ENCODE measurements at regions of chr15 and their contacts with region 1.

Region 1: GRCh38 chr15:89358755-89359439 is 24.3 kb upstream of the POLG start:
- DNase-seq: peak; percentile 6
- H3K4me3 ChIP-seq: peak overlapping the region; percentile 45
- H3K27me3 ChIP-seq: peaks cover 67% of the 10 kb centered on the region
- CTCF ChIP-seq: peak; percentile 91

Region 2: GRCh38 chr15:89230277-89230676 is 128.6 kb before region 1 on chr15:
- CTCF ChIA-PET with region 1: no interaction called
- POLR2A ChIA-PET with region 1: no interaction called
- DNase-seq: no peak
- H3K4me3 ChIP-seq: no peak overlapping the region
- H3K27me3 ChIP-seq: no peaks in the 10 kb centered on the region; the same call in 1 of the 2 replicates
- CTCF ChIP-seq: peak; percentile 38

Region 3: DNA sequence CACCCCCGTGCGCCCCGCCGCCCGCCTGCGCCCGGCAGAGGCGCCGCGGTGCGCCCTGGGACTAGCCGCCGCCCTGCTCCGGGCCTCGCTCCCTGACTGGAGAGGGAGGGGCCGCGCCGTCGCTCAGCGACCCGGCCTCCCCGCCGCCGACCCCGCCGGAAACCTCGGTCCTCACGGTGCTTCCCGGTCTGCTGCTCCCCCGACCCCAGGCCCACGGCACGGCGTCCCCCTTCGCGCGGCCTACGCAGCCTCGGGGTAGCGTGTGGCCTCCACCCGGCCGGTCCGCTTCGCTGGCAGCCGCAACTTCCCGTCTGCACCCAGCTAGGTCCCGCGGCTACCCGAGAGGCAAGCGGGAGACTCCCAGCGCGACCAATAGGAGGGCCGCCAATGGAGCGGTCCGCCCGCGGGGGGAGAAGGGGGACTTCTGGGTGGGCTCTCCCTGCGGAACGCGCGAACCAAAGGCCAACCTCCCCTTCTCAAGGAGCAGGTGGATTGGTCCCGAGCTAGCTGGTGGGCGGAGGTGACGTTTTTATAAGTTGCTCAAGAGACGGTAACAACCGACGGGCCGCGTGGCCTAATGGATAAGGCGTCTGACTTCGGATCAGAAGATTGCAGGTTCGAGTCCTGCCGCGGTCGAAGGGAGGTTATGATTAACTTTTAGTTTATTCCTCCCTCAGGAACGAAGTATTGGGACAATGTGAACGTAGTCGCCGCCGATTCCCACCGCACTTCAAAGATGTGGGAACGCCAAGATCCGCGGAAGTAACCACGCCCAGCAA is 24.2 kb before region 1 on chr15 and contains the start of gene POLG:
- CTCF ChIA-PET with region 1: interaction called, 69 read pairs
- POLR2A ChIA-PET with region 1: no interaction called
- DNase-seq: peak; percentile 92
- H3K4me3 ChIP-seq: peak within 1 kb of the TSS; percentile 92
- H3K27me3 ChIP-seq: peaks cover 7% of the 10 kb centered on the region
- CTCF ChIP-seq: no peak
- polyA plus RNA-seq, gene POLG: 13.9 and 17.6 TPM in 2 replicates

Region 4: GRCh38 chr15:89383365-89384175 is 24.7 kb after region 1 on chr15:
- CTCF ChIA-PET with region 1: interaction called, 35 read pairs
- POLR2A ChIA-PET with region 1: no interaction called
- DNase-seq: no peak
- H3K4me3 ChIP-seq: no peak overlapping the region
- H3K27me3 ChIP-seq: peaks cover 32% of the 10 kb centered on the region
- CTCF ChIP-seq: no peak

Region 5: DNA sequence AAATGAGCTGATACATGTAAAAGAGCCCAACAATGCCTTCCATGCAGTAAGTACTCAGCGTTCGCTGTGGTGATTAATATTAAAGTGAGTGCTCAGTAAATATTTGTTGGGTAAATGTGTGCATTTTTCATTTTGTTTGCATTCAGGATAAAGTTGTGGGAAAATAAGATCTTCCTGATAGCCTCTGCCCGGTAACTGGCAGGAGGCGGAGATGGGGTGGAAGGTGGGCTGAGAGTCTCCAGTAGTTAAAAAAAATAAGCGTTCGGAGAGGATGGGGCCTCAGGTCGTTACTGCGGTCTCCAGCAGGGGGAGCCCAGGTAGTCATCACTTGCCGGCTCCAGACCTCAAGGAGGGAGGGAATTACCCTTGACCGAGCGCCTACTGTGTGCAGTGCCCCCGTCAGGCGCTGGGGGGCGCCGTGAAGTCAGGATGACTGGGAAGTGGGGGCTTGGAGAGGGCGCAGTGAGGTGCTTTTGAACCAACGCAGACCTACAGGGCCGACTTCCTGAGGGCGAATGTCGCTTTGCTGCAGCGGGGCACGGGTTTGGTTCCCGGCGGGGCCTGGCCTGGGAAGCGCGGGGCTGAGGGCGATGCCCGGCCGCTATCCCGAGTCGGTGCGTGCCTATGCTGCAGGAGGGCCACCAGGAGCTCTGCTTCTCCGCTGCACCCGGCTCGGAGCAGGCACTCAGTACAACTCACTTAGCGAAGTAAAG is 57.4 kb after region 1 on chr15:
- CTCF ChIA-PET with region 1: interaction called, 79 read pairs
- POLR2A ChIA-PET with region 1: no interaction called
- DNase-seq: no peak
- H3K4me3 ChIP-seq: no peak overlapping the region
- H3K27me3 ChIP-seq: peaks cover 54% of the 10 kb centered on the region
- CTCF ChIP-seq: peak; percentile 82

Region 6: DNA sequence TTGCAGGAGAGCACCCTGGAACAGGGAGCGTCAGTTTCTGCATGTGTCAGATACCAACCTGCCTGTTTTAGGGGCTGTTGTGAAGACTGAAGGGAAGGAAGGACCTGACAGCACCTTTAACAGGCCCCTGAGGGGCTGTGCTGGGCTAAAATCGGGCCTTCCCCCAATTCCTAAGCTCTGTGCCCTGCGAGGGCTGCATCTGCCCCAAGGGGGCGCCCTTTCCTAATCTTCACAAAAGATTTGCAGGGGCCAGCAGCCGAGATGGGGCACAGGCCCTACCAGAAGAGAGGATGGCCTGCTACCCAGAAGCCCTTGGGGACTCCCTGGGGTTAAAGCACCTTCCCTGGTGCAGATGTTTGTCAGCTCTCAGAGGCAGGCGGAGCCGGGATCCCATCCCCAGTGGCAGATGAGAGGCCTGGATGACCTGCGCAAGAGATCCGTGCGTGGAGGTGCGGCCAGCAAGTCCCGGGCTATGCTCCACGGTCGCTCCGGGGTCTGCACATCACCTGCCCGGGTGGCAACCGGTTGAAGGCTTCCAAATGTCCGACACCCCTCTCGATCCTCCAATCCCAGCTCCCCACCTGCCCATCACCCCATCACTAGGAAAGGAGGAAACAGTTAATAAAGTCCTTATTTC is 83.9 kb after region 1 on chr15:
- CTCF ChIA-PET with region 1: interaction called, 89 read pairs
- POLR2A ChIA-PET with region 1: no interaction called
- DNase-seq: no peak
- H3K4me3 ChIP-seq: no peak overlapping the region
- H3K27me3 ChIP-seq: peaks cover 36% of the 10 kb centered on the region
- CTCF ChIP-seq: peak; percentile 74

Region 7: GRCh38 chr15:89556413-89557262 is 197.7 kb after region 1 on chr15:
- CTCF ChIA-PET with region 1: interaction called, 16 read pairs
- POLR2A ChIA-PET with region 1: no interaction called
- DNase-seq: peak; percentile 19
- H3K4me3 ChIP-seq: no peak overlapping the region
- H3K27me3 ChIP-seq: peaks cover 11% of the 10 kb centered on the region
- CTCF ChIP-seq: peak; percentile 83

Measured in BJ (cell line).